GM12878 (cell line): ENCODE measurements at regions of chr10 and their contacts with region 1.

Region 1: GRCh38 chr10:79487296-79488194 is 24.8 kb upstream of the EIF5AL1 start:
- DNase-seq: no peak
- ATAC-seq: peak; percentile 95
- H3K4me3 ChIP-seq: no peak overlapping the region
- H3K27ac ChIP-seq: no peak overlapping the region
- H3K4me1 ChIP-seq: peaks cover 6% of the 10 kb centered on the region
- H3K27me3 ChIP-seq: no peaks in the 10 kb centered on the region; a peak in 1 of 4 replicates
- CTCF ChIP-seq: peak; percentile 72 to 83 (median 78)
- EP300 ChIP-seq: no peak
- POLR2A ChIP-seq: no peak
- RAD21 ChIP-seq: peak; percentile 66

Region 2: DNA sequence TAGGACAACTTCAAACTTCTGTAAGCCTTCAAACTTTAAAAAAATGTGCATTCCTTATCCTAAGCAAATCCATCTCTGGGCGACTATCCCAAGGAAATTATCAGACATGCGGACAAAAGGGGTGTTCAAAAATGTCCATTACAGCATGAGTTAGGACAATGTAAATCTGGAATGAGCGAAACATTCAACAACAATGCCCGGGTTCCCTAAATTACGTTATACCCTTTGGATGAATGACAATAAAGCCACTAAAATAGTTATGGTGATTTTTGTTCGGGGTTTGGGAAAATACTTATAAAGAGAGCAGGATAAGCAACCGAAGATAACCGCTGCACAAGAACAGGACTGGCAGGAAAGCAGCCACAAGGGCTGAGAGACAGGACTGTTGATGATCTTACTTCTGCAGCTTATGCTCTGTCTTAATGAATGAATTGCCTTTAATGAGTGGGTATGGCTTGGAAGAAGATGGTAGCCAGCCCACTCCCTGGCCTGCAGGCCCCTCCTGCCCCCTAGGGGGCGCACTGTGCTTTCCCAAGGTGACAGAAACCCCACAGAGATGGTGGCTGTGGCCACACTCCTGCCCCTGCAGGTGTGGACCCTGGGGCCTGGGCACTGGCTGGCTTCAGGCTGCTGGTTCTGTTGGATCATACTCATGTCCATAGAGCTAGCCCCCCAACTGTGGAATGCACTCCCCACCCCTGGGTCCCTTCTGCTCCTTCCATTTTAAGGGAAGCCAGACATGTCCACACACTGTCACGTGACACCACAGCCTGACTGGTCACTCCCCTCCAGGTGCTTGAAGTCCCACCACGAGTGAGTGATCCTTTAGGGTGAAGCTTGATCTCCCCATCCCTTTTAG is 87.2 kb before region 1 on chr10:
- CTCF ChIA-PET with region 1: interaction called, 3 read pairs
- POLR2A ChIA-PET with region 1: no interaction called
- RAD21 ChIA-PET with region 1: interaction called, 3 read pairs
- SMC1A ChIA-PET with region 1: no interaction called
- in situ Hi-C with region 1: no loop called
- intact Hi-C with region 1: loop called (anchors 1 kb)
- DNase-seq: no peak
- ATAC-seq: peak; percentile 94
- H3K4me3 ChIP-seq: no peak overlapping the region
- H3K27ac ChIP-seq: no peak overlapping the region
- H3K4me1 ChIP-seq: no peaks in the 10 kb centered on the region
- H3K27me3 ChIP-seq: no peaks in the 10 kb centered on the region; a peak in 3 of 4 replicates
- CTCF ChIP-seq: peak; percentile 70 to 92 (median 75)
- EP300 ChIP-seq: no peak
- POLR2A ChIP-seq: no peak
- RAD21 ChIP-seq: peak; percentile 65

Region 3: GRCh38 chr10:79602953-79603352 is 115.4 kb after region 1 on chr10:
- CTCF ChIA-PET with region 1: no interaction called
- POLR2A ChIA-PET with region 1: no interaction called
- RAD21 ChIA-PET with region 1: no interaction called
- SMC1A ChIA-PET with region 1: no interaction called
- in situ Hi-C with region 1: no loop called
- intact Hi-C with region 1: no loop called
- DNase-seq: no peak
- ATAC-seq: no peak
- H3K4me3 ChIP-seq: no peak overlapping the region
- H3K27ac ChIP-seq: no peak overlapping the region
- H3K4me1 ChIP-seq: no peaks in the 10 kb centered on the region
- H3K27me3 ChIP-seq: no peaks in the 10 kb centered on the region
- CTCF ChIP-seq: no peak
- EP300 ChIP-seq: no peak
- POLR2A ChIP-seq: no peak
- RAD21 ChIP-seq: no peak